WTC11 (cell line): ENCODE measurements at regions of chr21 and their contacts with region 1.

Region 1: DNA sequence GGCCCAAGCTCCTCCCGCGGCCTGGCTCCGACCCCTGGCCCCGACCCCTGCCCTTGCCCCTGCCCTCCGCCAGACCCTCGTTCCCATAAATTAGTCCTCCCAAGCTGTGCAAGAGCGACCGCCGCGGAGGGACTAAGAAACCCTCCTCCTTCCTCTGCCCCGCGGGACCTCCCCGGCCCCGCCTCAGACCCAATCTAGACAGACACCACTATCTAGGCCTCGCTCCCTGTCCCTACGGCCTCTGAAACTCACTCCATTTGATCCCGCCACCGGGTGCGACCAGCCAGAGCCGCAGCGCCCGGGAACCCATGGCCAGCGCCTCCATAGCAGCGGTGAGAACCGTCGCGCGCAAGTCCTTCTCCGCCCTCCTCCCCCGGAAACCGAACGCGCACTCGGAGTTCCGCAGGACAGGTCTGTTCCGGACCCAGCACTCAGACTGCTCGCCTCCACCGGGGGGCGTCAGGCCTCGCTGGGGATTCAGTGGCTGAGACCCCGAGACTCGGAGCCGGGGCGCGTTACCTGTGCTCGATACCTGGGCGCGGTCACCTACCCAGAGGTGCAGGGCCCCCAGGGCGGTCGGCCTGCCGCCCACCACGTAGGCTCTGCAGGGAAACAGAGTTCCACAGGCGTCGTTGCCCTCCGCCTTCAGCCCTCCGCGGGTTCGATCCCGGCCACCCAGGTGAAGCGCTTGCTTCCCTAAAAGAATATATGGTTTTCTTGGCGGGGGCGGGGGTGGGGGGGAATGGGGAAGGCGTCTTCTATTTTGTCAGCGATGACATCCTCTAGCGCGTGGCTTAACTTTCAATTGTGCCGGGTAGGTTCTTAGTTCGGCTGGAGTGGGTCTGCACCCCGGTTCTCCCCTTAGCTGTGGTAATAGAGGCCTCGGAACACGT is at the start of gene MRPL39:
- DNase-seq: peak; percentile 93
- ATAC-seq: peak; percentile 95
- H3K4me3 Mint-ChIP-seq: peak within 1 kb of the TSS; percentile 99
- H3K27ac Mint-ChIP-seq: peak within 1 kb of the TSS; percentile 99
- H3K4me1 Mint-ChIP-seq: peaks cover 11% of the 10 kb centered on the region
- H3K27me3 Mint-ChIP-seq: no peaks in the 10 kb centered on the region
- CTCF ChIP-seq: no peak; the same call in 1 of the 2 replicates
- total RNA-seq, gene MRPL39: 34.7 to 39.2 TPM (median 37.2 TPM) in 3 replicates

Region 2: DNA sequence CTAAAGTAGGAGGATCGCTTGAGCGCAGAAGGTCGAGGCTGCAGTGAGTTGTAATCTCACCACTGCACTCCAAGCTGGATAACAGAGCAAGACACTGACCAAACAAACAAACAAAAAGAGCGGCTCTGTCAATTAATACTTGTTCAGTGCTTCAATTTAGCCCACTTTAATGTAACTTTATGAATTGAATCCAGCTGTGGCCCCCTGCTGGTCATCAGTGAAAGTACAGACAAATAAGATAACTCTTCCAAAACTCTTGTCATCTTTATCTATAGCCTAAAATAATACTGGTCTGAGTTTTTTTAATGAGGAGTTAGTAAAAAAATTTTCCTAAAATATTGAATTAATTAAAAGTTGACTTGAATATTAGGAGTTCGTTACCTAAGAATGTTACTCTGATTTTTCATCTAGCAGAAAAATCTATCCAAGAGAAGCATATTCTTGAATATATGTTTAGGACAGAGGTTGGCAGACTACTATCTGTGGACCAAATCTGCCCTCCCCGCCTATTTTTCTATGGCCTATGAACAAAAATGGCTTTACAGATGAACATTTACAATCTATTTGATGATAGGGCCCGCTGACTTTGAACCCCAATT is 101.2 kb after region 1 on chr21:
- CTCF ChIA-PET with region 1: interaction called, 19 read pairs
- POLR2A ChIA-PET with region 1: no interaction called
- DNase-seq: peak; percentile 21
- ATAC-seq: no peak
- H3K4me3 Mint-ChIP-seq: no peak overlapping the region
- H3K27ac Mint-ChIP-seq: no peak overlapping the region
- H3K4me1 Mint-ChIP-seq: peaks cover 5% of the 10 kb centered on the region
- H3K27me3 Mint-ChIP-seq: no peaks in the 10 kb centered on the region
- CTCF ChIP-seq: peak; percentile 73